ENCODE measurements at regions of chr5 and their contacts with region 1.

Region 1: DNA sequence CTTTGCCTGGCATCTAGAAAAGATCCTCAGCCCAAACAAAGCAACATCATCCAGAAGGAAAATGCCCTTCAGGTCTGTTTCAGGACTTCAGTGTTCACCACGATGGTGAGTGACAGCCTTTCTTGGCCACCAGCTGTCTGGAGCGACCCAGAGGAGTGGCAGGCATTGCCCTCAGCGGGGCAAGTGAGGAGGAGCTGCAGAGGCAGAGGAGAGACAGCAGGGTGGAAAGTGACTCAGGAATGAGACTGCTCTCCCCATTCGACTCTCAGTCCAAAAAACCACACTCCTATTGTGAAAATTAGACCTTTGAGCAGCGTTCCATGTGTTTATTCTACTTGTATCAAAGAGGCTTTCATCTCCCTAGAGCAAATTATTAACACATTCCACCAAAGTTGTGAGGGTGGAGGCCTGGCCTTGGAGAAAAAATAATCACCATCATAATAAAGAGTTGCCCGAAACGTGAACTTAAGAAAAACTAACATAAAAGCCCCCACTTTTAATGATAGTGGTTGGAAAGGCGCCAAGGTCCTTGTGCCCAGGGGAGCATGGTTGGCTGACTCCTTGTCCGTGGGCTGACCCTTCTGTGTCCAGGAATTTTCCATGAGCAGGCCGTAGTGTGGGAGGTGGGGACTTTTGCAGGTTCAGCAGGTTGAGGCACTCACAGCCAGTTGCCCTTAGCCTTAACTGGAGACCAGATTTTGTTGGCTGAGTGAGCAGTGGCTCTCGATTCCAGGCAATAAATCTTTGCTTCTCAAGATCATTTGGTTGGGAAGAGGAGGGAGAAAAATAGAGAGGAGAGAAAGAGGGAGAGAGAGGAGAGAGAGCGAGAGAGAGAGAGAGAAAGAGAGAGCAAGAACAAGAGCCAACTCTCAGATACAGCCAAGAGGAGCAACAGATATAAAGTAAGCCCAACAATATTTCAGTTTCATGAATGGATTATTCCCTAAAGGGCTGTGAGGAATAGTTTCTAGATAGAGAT is 125.9 kb upstream of the ANKRD55 start:
- DNase-seq: peak; percentile 91 to 96
- H3K4me3 ChIP-seq: no peak overlapping the region
- H3K4me3 Mint-ChIP-seq: peak overlapping the region; percentile 68
- H3K27ac Mint-ChIP-seq: peak overlapping the region; percentile 85
- H3K4me1 ChIP-seq: peaks cover 61% of the 10 kb centered on the region
- H3K4me1 Mint-ChIP-seq: peaks cover 50% of the 10 kb centered on the region
- H3K27me3 ChIP-seq: no peaks in the 10 kb centered on the region
- H3K27me3 Mint-ChIP-seq: no peaks in the 10 kb centered on the region
- CTCF ChIP-seq: no peak

Region 2: DNA sequence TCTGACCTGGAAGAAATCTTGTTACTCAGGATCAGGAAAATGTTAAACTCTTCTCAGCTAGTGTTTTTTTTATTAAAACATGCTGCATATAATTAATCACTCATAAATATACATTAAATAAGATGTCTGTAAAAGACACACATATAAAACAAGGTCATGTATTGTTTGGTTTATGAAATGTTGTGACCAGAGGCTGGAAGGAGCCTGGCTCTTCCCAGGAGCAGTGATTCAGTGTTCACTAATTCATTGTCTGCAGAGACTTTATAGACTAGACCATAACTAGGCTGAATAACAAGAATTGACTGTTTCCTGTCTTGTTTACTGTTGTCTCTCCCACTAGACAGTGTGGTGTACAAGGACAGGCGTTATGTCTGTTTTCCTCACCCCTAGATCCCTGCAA is 76.8 kb before region 1 on chr5:
- CTCF ChIA-PET with region 1: no interaction called
- POLR2A ChIA-PET with region 1: no interaction called
- intact Hi-C with region 1: loop called (anchors 2 kb)
- DNase-seq: no peak
- H3K4me3 ChIP-seq: no peak overlapping the region
- H3K4me3 Mint-ChIP-seq: no peak overlapping the region
- H3K27ac Mint-ChIP-seq: no peak overlapping the region
- H3K4me1 ChIP-seq: peaks cover 53% of the 10 kb centered on the region
- H3K4me1 Mint-ChIP-seq: peaks cover 10% of the 10 kb centered on the region
- H3K27me3 ChIP-seq: no peaks in the 10 kb centered on the region
- H3K27me3 Mint-ChIP-seq: no peaks in the 10 kb centered on the region
- CTCF ChIP-seq: no peak

Region 3: DNA sequence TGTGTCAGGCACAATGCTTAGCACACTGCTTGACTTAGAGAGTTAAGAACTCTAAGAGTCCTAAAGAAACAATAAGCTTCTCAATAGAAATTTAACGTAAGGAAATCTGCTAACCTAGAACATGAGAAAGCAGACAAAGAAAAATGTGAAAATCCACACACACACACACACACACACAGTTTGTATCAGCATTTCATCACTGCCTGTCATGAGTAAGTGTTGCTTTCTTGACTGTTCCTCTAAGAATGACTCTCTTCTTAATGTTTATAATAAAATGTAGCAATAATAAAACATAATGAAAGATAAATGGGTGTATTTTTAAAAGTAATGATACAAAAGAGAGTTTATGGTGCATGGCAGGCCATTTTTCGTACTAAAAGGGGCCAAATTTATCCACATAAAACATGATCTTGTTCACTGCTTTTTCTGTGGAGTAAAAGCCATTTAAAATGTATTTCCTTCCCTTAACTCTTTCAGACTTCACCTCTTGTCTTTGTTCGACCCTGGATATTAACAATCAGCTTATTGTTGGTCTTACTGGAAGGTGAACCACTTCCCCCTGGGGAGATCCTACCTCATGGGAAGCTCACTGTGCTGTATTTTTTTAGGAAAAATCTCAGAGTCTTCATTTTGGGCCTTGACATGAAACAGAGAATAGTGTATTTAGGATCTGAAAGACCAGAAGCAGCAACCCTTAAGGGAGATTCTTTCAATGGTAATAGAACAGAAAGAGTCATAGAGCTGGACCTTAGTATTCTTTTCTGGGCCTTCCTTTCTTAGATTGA is 18.6 kb before region 1 on chr5:
- CTCF ChIA-PET with region 1: no interaction called
- POLR2A ChIA-PET with region 1: no interaction called
- intact Hi-C with region 1: no loop called
- DNase-seq: no peak
- H3K4me3 ChIP-seq: no peak overlapping the region
- H3K4me3 Mint-ChIP-seq: no peak overlapping the region
- H3K27ac Mint-ChIP-seq: no peak overlapping the region
- H3K4me1 ChIP-seq: no peaks in the 10 kb centered on the region
- H3K4me1 Mint-ChIP-seq: no peaks in the 10 kb centered on the region
- H3K27me3 ChIP-seq: no peaks in the 10 kb centered on the region
- H3K27me3 Mint-ChIP-seq: no peaks in the 10 kb centered on the region
- CTCF ChIP-seq: no peak

Region 4: GRCh38 chr5:56376128-56376527 is 17.1 kb after region 1 on chr5:
- CTCF ChIA-PET with region 1: interaction called, 3 read pairs
- POLR2A ChIA-PET with region 1: no interaction called
- intact Hi-C with region 1: loop called (anchors 1 kb)
- DNase-seq: peak; percentile 53 to 55
- H3K4me3 ChIP-seq: no peak overlapping the region
- H3K4me3 Mint-ChIP-seq: no peak overlapping the region
- H3K27ac Mint-ChIP-seq: no peak overlapping the region
- H3K4me1 ChIP-seq: peaks cover 18% of the 10 kb centered on the region; the same call in 1 of the 2 replicates
- H3K4me1 Mint-ChIP-seq: peaks cover 13% of the 10 kb centered on the region
- H3K27me3 ChIP-seq: no peaks in the 10 kb centered on the region
- H3K27me3 Mint-ChIP-seq: no peaks in the 10 kb centered on the region
- CTCF ChIP-seq: no peak

Region 5: GRCh38 chr5:56440871-56441740 is 82.1 kb after region 1 on chr5:
- CTCF ChIA-PET with region 1: no interaction called
- POLR2A ChIA-PET with region 1: no interaction called
- intact Hi-C with region 1: loop called (anchors 1 kb)
- DNase-seq: peak; percentile 70 to 75
- H3K4me3 ChIP-seq: no peak overlapping the region
- H3K4me3 Mint-ChIP-seq: peak overlapping the region; percentile 59
- H3K27ac Mint-ChIP-seq: peak overlapping the region; percentile 81
- H3K4me1 ChIP-seq: peaks cover 42% of the 10 kb centered on the region
- H3K4me1 Mint-ChIP-seq: peaks cover 23% of the 10 kb centered on the region
- H3K27me3 ChIP-seq: no peaks in the 10 kb centered on the region
- H3K27me3 Mint-ChIP-seq: no peaks in the 10 kb centered on the region
- CTCF ChIP-seq: no peak

Region 6: DNA sequence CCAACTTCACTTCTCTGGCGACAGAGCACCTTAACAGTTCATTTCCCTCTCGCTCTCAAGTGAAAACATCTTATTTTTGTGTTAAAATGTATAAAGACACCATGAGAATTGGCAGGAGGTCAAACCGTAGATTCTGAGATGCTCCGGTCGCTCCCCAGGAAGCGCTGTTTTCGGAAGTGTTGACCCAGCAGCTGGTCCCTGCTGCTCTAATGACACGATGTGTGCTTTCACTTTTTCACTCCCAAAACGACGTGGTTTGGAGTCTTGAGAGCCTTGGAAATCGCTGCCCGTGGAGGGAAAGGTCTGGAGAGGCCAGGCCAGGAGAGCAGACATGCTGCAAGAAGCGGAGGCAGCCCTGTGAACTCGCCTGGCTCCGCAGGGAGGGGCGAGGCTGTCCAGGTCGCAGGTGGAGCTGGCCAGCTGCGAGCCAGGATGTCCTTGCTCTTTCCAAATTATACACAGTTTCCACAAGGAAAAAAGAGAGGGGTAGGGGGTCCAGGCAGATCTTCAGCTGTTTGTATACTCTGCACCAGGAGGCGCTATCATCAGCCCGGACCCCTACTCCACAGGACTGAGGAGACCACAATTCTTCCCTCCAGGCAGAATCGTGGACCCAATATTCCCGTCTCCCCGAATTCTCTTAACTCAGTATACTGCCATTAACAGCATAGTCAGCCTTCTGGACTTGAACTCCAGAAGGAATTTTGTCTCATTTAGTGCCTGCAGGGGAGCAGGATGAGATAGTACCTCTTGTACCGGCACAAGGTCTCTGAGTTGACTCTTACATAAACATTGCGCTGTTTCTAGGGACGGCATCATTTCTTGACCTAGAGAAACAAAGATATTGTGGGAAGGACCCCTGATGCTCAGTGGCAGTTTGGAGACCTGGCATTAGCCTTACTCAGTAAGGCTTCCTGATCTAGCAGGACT is 122.7 kb after region 1 on chr5:
- CTCF ChIA-PET with region 1: no interaction called
- POLR2A ChIA-PET with region 1: interaction called, 5 read pairs
- intact Hi-C with region 1: loop called (anchors 1 kb)
- DNase-seq: peak; percentile 62 to 66
- H3K4me3 ChIP-seq: peak overlapping the region; percentile 56
- H3K4me3 Mint-ChIP-seq: peak overlapping the region; percentile 69
- H3K27ac Mint-ChIP-seq: peak overlapping the region; percentile 71
- H3K4me1 ChIP-seq: peaks cover 40% of the 10 kb centered on the region
- H3K4me1 Mint-ChIP-seq: peaks cover 24% of the 10 kb centered on the region
- H3K27me3 ChIP-seq: no peaks in the 10 kb centered on the region
- H3K27me3 Mint-ChIP-seq: no peaks in the 10 kb centered on the region
- CTCF ChIP-seq: peak in 1 of 2 experiments; percentile 55

Region 7: GRCh38 chr5:56814963-56815658 is 456.1 kb after region 1 on chr5 and contains the start of gene MAP3K1:
- CTCF ChIA-PET with region 1: no interaction called
- POLR2A ChIA-PET with region 1: interaction called, 4 read pairs
- intact Hi-C with region 1: loop called (anchors 1 kb)
- DNase-seq: peak; percentile 95 to 96
- H3K4me3 ChIP-seq: peak within 1 kb of the TSS; percentile 92
- H3K4me3 Mint-ChIP-seq: peak within 1 kb of the TSS; percentile 97
- H3K27ac Mint-ChIP-seq: peak within 1 kb of the TSS; percentile 93
- H3K4me1 ChIP-seq: peaks cover 42% of the 10 kb centered on the region
- H3K4me1 Mint-ChIP-seq: peaks cover 20% of the 10 kb centered on the region
- H3K27me3 ChIP-seq: no peaks in the 10 kb centered on the region
- H3K27me3 Mint-ChIP-seq: no peaks in the 10 kb centered on the region
- CTCF ChIP-seq: no peak
- total RNA-seq, gene MAP3K1: 46.0 and 47.0 TPM in 2 replicates